MCF 10A (cell line): ENCODE measurements at regions of chr9 and their contacts with region 1.

Region 1: GRCh38 chr9:19230356-19231125 is at the start of gene DENND4C:
- DNase-seq: peak; percentile 91
- H3K4me3 Mint-ChIP-seq: no peak within 1 kb of the TSS
- H3K27ac Mint-ChIP-seq: no peak within 1 kb of the TSS
- H3K4me1 Mint-ChIP-seq: peaks cover 12% of the 10 kb centered on the region
- H3K27me3 Mint-ChIP-seq: no peaks in the 10 kb centered on the region
- CTCF ChIP-seq: no peak
- total RNA-seq, gene DENND4C: 26.4 and 36.4 TPM in 2 replicates

Region 2: GRCh38 chr9:19184144-19184917 is 46.2 kb before region 1 on chr9:
- CTCF ChIA-PET with region 1: interaction called, 7 read pairs
- POLR2A ChIA-PET with region 1: interaction called, 84 read pairs
- intact Hi-C with region 1: loop called (anchors 5 kb)
- DNase-seq: peak; percentile 74
- H3K4me3 Mint-ChIP-seq: peak overlapping the region; percentile 38
- H3K27ac Mint-ChIP-seq: peak overlapping the region; percentile 98
- H3K4me1 Mint-ChIP-seq: peaks cover 13% of the 10 kb centered on the region
- H3K27me3 Mint-ChIP-seq: no peaks in the 10 kb centered on the region
- CTCF ChIP-seq: no peak

Region 3: GRCh38 chr9:19286634-19287200 is 56.2 kb after region 1 on chr9:
- CTCF ChIA-PET with region 1: no interaction called
- POLR2A ChIA-PET with region 1: interaction called, 7 read pairs
- intact Hi-C with region 1: loop called (anchors 5 kb)
- DNase-seq: peak; percentile 65
- H3K4me3 Mint-ChIP-seq: no peak overlapping the region
- H3K27ac Mint-ChIP-seq: no peak overlapping the region
- H3K4me1 Mint-ChIP-seq: peaks cover 5% of the 10 kb centered on the region
- H3K27me3 Mint-ChIP-seq: no peaks in the 10 kb centered on the region
- CTCF ChIP-seq: no peak

Region 4: DNA sequence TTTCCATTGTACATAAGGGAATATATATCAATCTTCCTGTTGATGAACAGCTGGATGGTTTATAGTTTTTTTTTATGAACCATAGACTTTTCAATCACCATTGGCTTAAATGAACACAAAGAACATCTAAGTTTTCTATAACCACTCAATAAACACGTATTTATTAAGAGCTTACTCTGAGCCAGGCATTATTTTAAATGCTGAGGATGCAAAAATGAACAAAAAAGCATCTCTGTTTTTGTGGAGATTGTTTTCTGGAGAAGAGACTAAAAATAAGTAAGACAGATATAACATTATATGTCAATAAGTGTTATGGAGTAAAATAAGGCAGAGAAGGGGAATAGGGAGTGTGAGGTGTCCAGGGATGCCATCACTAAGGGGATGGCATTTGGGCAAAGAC is 610.4 kb after region 1 on chr9:
- CTCF ChIA-PET with region 1: no interaction called
- POLR2A ChIA-PET with region 1: no interaction called
- intact Hi-C with region 1: no loop called
- DNase-seq: no peak
- H3K4me3 Mint-ChIP-seq: no peak overlapping the region
- H3K27ac Mint-ChIP-seq: no peak overlapping the region
- H3K4me1 Mint-ChIP-seq: no peaks in the 10 kb centered on the region
- H3K27me3 Mint-ChIP-seq: peaks cover 12% of the 10 kb centered on the region
- CTCF ChIP-seq: no peak